Calu3 (cell line): ENCODE measurements at regions of chr17 and their contacts with region 1.

Region 1: GRCh38 chr17:44331249-44331760 is 6.7 kb upstream of the SLC25A39 start:
- DNase-seq: peak; percentile 91
- H3K4me3 Mint-ChIP-seq: no peak overlapping the region
- H3K27ac Mint-ChIP-seq: no peak overlapping the region
- H3K4me1 Mint-ChIP-seq: peaks cover 11% of the 10 kb centered on the region
- H3K27me3 Mint-ChIP-seq: no peaks in the 10 kb centered on the region
- CTCF ChIP-seq: peak; percentile 86

Region 2: DNA sequence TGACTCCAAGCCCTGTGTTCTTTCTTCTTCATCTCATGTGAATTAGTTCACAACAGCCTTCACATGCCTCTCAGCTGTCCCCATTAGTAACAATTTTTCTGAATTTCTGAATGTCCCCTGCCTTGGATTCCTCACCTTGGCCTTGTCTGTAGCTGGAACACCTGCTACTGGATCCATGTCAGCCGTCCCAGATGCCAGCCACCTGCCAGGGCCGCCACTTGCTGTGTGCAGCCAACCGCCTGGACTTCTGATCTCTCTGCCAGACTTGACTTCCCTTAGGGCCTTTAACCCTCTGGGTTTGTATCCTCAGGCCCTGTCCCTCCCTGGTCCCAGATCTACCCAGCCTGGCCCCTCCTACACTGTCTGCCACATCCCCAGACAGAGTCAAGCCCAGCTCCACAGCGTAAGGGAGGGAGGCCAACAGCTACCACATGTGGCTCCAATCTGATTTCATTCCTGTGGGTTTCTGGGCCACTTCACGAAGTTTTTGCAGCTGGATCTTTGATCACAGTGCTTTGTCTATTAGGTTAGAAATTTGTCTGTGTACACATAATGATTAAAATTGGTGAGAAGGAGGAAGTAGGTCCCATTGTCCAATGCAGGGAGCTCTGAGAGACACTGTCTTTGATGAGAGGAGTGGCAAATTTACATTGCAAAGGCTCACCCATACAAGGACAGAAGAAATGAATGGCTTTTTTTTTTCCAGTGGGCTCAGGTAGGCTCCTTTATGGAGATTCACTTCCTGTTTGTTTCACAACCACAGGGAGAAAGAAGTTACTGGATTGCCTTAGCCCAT is 439.3 kb before region 1 on chr17:
- CTCF ChIA-PET with region 1: no interaction called
- intact Hi-C with region 1: no loop called
- DNase-seq: no peak
- H3K4me3 Mint-ChIP-seq: no peak overlapping the region
- H3K27ac Mint-ChIP-seq: no peak overlapping the region
- H3K4me1 Mint-ChIP-seq: no peaks in the 10 kb centered on the region
- H3K27me3 Mint-ChIP-seq: peaks cover 66% of the 10 kb centered on the region
- CTCF ChIP-seq: no peak

Region 3: DNA sequence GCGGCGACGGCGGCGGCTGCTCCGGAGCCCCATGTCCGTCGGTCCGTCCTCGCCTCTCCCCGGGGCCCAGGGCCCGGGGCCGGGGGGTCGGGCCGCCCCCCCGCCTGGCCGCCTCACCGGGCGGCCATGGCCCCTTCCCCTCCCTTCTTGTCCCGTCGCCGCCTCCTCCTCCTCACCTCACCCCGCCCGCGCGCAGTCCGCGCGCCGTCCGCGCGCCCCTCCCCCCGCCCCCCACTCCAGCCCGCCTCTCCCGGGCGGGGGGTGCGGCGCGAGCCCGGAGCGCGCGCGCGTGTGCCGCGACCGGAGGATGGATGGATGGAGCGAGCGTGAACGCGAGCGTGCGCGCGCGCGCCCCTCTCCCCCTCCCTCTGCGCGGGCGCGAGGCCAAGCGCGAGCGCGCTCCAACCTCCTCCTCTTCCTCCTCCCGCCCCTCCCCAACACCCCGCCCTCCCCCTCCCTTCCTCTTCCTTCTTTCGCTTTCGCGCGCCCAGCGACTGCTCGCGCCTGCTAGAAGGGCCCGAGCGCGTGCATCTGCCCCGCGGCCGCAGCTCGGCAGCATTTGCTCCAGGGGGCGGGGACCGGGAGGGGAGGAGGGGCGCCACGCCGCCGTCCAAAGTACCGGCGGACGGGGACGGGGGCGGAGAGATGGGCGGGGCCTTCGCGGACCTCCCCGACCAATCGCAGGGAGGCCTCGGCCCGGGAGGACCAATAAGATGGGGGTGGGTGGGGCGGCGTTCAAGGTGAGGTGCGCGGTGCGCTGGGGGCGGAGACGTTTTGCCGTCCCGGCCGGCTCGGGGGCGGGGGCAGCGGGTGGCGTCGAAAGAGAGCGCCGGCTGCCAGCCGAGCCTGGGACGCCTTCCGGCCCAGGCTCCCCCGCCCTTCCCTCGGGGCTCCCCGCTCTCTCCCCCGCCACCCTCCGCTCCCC is 131.5 kb before region 1 on chr17 and contains the start of gene ATXN7L3:
- CTCF ChIA-PET with region 1: interaction called, 3 read pairs
- intact Hi-C with region 1: loop called (anchors 2 kb)
- DNase-seq: peak; percentile 100
- H3K4me3 Mint-ChIP-seq: peak within 1 kb of the TSS; percentile 90
- H3K27ac Mint-ChIP-seq: peak within 1 kb of the TSS; percentile 90
- H3K4me1 Mint-ChIP-seq: peaks cover 42% of the 10 kb centered on the region
- H3K27me3 Mint-ChIP-seq: no peaks in the 10 kb centered on the region
- CTCF ChIP-seq: no peak
- total RNA-seq, gene ATXN7L3: 93.1 and 112 TPM in 2 replicates

Region 4: GRCh38 chr17:44363613-44364159 is 32.4 kb after region 1 on chr17 and contains the start of gene FAM171A2:
- CTCF ChIA-PET with region 1: interaction called, 10 read pairs
- intact Hi-C with region 1: no loop called
- DNase-seq: peak; percentile 87
- H3K4me3 Mint-ChIP-seq: peak within 1 kb of the TSS; percentile 63
- H3K27ac Mint-ChIP-seq: no peak within 1 kb of the TSS
- H3K4me1 Mint-ChIP-seq: peaks cover 10% of the 10 kb centered on the region
- H3K27me3 Mint-ChIP-seq: peaks cover 87% of the 10 kb centered on the region
- CTCF ChIP-seq: peak; percentile 96
- total RNA-seq, gene FAM171A2: 0.95 and 2.0 TPM in 2 replicates

Region 5: GRCh38 chr17:44587339-44587738 is 256.0 kb after region 1 on chr17:
- CTCF ChIA-PET with region 1: no interaction called
- intact Hi-C with region 1: no loop called
- DNase-seq: peak; percentile 90
- H3K4me3 Mint-ChIP-seq: peak overlapping the region; percentile 13
- H3K27ac Mint-ChIP-seq: peak overlapping the region; percentile 74
- H3K4me1 Mint-ChIP-seq: peaks cover 17% of the 10 kb centered on the region
- H3K27me3 Mint-ChIP-seq: peaks cover 4% of the 10 kb centered on the region
- CTCF ChIP-seq: no peak